ENCODE measurements at regions of chr6 and their contacts with region 1.

Region 1: DNA sequence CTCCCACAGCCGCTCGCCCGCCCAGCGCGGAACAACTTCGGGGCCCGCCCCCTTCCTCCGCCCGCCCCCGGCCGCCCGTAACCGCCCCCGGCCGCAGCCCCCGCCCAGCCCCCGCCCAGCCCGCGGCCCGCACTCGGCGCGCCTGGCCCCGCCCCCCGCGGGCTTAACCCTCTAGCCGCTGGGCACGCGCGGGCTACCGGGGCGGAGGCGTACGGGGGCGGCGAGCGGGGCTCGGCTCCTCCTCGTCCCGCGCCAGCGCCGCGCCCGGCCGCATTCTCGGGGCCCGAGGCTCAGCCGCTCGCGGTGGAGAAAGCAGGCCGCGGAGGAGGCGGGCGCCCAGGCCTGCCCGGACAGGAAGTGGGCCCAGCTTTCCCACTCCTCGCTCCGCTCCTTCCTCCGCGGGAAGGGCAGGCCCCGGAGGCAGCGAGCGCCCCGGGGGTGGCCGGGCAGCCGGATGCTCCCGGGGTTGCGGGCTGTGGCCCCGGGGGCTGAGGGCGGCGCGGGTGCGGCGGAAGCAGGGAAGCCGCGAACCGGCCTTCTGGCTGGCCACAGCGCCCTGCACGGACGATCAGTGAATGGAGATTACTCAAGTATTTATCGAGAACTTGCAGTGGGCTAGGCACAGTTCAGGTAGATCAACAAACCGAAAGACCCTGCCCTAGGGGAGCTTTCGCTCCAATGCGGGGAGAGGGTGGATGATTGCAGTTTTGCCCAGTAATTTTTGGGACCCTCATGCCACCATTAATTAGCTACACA is at the start of gene TRAM2:
- DNase-seq: peak; percentile 90

Region 2: GRCh38 chr6:52598123-52598823 is 21.1 kb after region 1 on chr6:
- CTCF ChIA-PET with region 1: interaction called, 5 read pairs
- POLR2A ChIA-PET with region 1: interaction called, 12 read pairs
- DNase-seq: peak; percentile 87

Region 3: GRCh38 chr6:53042112-53042511 is 464.9 kb after region 1 on chr6:
- CTCF ChIA-PET with region 1: no interaction called
- POLR2A ChIA-PET with region 1: no interaction called
- DNase-seq: no peak

Region 4: DNA sequence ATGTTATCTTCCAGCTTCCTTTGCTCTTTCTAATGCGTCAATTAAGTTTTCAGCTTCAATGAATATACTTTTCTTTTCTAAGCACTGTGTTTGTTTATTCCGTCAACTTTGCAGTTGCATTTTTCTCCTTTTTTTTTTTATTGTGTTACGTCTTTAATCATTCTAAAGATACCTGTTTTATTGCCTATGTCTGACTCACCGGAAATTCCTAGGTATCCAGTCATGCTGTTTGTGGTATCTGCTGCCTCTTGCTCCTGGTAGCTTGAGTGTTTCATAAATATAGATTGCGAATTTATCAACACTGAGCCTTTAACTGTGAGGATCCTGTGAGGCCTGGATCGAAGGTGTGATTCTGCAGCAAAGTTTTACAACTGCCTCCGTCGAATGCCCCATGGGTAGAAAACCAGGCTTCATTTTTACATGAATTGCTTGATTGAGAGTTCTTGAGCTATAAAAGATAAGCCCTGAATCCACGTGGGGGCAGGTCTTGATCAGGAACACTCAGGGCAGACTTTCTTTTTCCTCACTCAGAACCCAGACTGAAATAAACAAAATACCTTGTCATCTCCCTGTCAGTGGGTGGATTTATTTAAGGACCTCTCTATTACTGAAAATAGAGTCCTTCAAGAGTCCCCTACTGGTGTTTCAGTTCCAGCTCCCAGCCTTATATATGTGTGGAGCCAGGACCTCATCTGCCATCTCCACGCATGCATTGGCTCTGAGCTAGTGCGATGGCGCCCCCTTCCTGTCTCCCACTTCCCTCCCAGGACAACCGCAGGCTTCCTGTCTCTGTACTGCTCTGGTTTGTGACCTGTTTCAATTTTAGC is 1157.5 kb after region 1 on chr6:
- CTCF ChIA-PET with region 1: no interaction called
- POLR2A ChIA-PET with region 1: no interaction called
- DNase-seq: peak; percentile 50

Measured in HEK293T (cell line).